OCI-LY7 (cell line): ENCODE measurements at regions of chr3 and their contacts with region 1.

Region 1: GRCh38 chr3:14124615-14125190 is at the starts of genes CHCHD4 and TMEM43:
- DNase-seq: peak; percentile 99
- H3K4me3 ChIP-seq: peak within 1 kb of the TSS; percentile 93
- H3K27ac ChIP-seq: peak within 1 kb of the TSS; percentile 69
- H3K4me1 ChIP-seq: peaks cover 31% of the 10 kb centered on the region
- CTCF ChIP-seq: no peak
- total RNA-seq, gene CHCHD4: 19.8 and 24.7 TPM in 2 replicates
- total RNA-seq, gene TMEM43: 22.2 and 23.3 TPM in 2 replicates

Region 2: GRCh38 chr3:13332158-13332557 is 792.5 kb before region 1 on chr3:
- CTCF ChIA-PET with region 1: no interaction called
- POLR2A ChIA-PET with region 1: no interaction called
- intact Hi-C with region 1: loop called (anchors 10 kb)
- DNase-seq: peak; percentile 98
- H3K4me3 ChIP-seq: peak overlapping the region; percentile 50
- H3K27ac ChIP-seq: peak overlapping the region; percentile 95
- H3K4me1 ChIP-seq: peaks cover 91% of the 10 kb centered on the region
- CTCF ChIP-seq: no peak

Region 3: DNA sequence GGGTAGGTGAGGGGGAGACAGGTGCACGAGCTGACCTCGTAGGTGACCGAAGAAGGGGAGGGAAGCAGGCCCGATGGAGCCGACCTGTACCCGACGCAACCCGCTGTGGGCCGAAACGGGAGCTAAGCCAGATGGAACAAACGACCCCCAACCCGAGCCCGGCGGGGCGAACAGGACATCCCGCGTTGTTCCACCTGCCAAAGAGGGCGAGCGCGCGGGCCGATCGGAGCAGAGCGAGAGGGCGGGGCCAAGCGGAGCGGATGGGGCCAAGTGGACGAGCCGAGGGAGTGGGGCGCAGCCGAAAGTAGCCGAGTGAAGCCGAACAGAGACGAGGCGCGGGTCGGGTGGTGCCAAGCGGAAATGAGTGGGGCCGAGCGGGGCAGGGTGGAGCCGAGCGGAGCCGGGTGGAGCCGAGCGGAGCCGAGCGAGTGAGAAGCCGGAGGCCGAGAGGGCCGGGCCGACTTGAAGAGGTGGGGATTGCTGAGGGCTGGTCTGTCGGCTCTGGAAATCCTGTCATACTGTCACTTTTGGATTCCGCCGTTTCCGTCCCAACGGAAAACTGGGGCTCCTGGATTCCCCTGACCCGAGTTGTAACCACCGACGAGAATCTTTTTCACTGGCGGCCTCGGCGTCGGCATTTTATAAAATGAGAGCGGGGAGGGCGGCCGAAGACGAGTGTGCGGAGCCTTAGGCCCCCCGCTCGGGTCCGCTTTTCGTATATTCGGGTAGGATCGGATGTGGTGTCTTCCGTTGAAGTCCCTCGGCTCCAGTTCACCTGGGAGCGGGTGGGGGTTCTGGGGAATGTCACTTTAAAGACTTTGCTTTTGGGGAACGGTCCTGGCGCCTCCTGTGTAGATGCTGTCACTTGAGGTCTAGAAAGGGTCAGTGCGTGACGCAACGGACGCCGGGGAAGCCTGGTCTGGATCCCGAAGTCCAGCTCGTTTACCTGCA is 229.3 kb before region 1 on chr3:
- CTCF ChIA-PET with region 1: no interaction called
- POLR2A ChIA-PET with region 1: no interaction called
- intact Hi-C with region 1: loop called (anchors 5 kb)
- DNase-seq: peak; percentile 82
- H3K4me3 ChIP-seq: peak overlapping the region; percentile 62
- H3K27ac ChIP-seq: no peak overlapping the region
- H3K4me1 ChIP-seq: peaks cover 19% of the 10 kb centered on the region
- CTCF ChIP-seq: no peak

Region 4: DNA sequence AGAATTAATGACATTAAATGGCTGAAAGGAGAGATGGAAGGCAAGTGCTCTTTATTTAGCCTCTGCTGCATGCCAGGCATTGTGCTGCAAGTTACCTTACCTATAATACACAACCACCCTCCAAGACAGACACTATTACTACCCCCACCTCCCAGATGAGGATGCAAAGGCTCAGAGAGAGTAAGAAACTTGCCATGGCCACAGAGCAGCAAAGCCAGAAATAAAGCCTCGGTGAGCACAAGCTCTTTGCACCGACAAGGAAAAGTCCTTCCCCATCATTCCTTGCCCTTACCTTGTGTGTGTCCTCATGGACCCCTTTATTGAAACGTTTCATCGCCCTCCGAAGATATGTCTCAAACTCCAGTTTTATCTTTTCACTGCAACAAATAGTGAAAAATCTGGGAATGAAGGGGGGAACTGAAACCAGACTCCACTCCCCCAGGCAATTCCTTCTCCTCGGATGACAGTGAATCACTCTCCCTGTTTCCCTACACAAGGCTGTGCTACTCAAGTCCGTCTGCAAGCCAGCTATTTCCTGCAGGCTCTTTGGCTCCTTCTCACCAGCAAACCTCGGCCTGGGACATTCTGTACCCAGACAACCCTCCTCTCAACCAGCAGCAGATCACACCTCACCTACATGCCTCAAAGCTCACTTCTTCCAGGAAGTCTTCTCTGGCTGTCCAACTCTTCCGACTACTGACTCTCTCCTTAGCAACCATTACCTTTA is 42.3 kb after region 1 on chr3:
- CTCF ChIA-PET with region 1: no interaction called
- POLR2A ChIA-PET with region 1: no interaction called
- intact Hi-C with region 1: no loop called
- DNase-seq: no peak
- H3K4me3 ChIP-seq: no peak overlapping the region
- H3K27ac ChIP-seq: no peak overlapping the region
- H3K4me1 ChIP-seq: no peaks in the 10 kb centered on the region
- CTCF ChIP-seq: no peak

Region 5: GRCh38 chr3:14178247-14179113 is 53.8 kb after region 1 on chr3 and contains the starts of genes LSM3 and XPC:
- CTCF ChIA-PET with region 1: interaction called, 3 read pairs
- POLR2A ChIA-PET with region 1: interaction called, 20 read pairs
- intact Hi-C with region 1: loop called (anchors 1 kb)
- DNase-seq: peak; percentile 99
- H3K4me3 ChIP-seq: peak within 1 kb of the TSS; percentile 91
- H3K27ac ChIP-seq: peak within 1 kb of the TSS; percentile 52
- H3K4me1 ChIP-seq: peaks cover 53% of the 10 kb centered on the region
- CTCF ChIP-seq: no peak
- total RNA-seq, gene LSM3: 12.4 and 15.6 TPM in 2 replicates
- total RNA-seq, gene XPC: 22.7 and 30.2 TPM in 2 replicates